Psoas muscle (tissue), 8 donors: ENCODE measurements at regions of chr9 and their contacts with region 1.

Region 1: GRCh38 chr9:95726756-95727155 is 148.7 kb upstream of the ERCC6L2 start:
- DNase-seq: no peak
- ATAC-seq: no peak
- H3K4me3 ChIP-seq: no peak overlapping the region
- H3K27ac ChIP-seq: no peak overlapping the region
- H3K4me1 ChIP-seq: no peaks in the 10 kb centered on the region
- H3K27me3 ChIP-seq: peaks cover 0 to 4% (median 0%) of the 10 kb centered on the region in 3 donors
- CTCF ChIP-seq: peak; percentile 56

Region 2: GRCh38 chr9:95783426-95783975 is 56.7 kb after region 1 on chr9:
- intact Hi-C with region 1: loop called in 1 of 2 experiments (anchors 10 kb)
- DNase-seq: no peak
- ATAC-seq: no peak
- H3K4me3 ChIP-seq: no peak overlapping the region
- H3K27ac ChIP-seq: no peak overlapping the region
- H3K4me1 ChIP-seq: no peaks in the 10 kb centered on the region
- H3K27me3 ChIP-seq: no peaks in the 10 kb centered on the region
- CTCF ChIP-seq: no peak

Region 3: DNA sequence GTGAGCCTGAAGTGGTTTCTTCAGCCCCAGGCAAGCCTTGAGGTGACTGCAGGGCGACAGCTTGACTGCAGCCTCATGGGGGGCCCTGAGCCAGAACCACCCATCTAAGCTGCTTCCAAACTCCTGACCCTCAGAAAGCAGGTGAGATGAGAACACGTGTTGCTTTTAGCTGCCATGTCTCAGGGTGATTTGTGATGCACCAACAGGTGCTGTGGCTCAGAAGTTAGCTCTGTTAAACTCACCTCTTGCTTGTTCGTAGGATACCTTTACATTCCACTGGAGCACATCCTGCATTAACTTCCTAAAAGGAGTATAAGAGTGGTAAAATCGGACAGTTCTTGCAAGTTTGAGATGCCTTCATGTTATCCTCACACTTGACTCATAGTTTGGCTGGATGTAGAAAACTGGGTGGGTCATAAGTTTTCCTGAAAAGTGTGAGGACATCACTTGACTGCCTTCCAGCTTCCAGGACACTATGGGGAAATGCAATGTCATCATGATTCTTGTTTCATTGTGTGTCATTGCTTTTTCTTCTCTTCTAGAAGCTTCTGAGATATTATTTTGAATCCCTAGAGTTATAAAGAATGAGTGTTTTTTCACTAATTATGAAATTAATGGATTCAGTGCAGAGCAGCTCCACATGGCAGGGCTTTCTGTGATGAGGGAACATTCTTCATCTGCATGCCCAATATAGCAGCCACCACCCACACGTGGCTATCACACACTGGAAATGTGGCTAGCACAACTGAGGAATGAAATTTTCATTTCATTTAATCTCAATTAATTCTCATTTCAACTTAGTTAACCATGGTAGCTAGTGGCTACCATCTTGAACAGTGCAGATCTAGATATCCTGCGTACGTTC is 482.9 kb after region 1 on chr9:
- intact Hi-C with region 1: loop called (anchors 5 to 10 kb)
- DNase-seq: no peak
- ATAC-seq: peak in 2 of 4 donors; percentile 32 to 37
- H3K4me3 ChIP-seq: no peak overlapping the region
- H3K27ac ChIP-seq: no peak overlapping the region
- H3K4me1 ChIP-seq: no peaks in the 10 kb centered on the region
- H3K27me3 ChIP-seq: peaks cover 0 to 2% (median under 1%) of the 10 kb centered on the region in 3 donors
- CTCF ChIP-seq: no peak

Region 4: GRCh38 chr9:96217754-96218693 is 491.3 kb after region 1 on chr9:
- intact Hi-C with region 1: loop called (anchors 5 to 10 kb)
- DNase-seq: peak; percentile 69 to 83
- ATAC-seq: peak; percentile 84 to 94 (median 85)
- H3K4me3 ChIP-seq: peak overlapping the region; percentile 45
- H3K27ac ChIP-seq: no peak overlapping the region
- H3K4me1 ChIP-seq: peaks cover 4% of the 10 kb centered on the region
- H3K27me3 ChIP-seq: peaks cover 4 to 46% (median 9%) of the 10 kb centered on the region in 3 donors
- CTCF ChIP-seq: peak; percentile 92